WTC11 (cell line): ENCODE measurements at regions of chr6 and their contacts with region 1.

Region 1: DNA sequence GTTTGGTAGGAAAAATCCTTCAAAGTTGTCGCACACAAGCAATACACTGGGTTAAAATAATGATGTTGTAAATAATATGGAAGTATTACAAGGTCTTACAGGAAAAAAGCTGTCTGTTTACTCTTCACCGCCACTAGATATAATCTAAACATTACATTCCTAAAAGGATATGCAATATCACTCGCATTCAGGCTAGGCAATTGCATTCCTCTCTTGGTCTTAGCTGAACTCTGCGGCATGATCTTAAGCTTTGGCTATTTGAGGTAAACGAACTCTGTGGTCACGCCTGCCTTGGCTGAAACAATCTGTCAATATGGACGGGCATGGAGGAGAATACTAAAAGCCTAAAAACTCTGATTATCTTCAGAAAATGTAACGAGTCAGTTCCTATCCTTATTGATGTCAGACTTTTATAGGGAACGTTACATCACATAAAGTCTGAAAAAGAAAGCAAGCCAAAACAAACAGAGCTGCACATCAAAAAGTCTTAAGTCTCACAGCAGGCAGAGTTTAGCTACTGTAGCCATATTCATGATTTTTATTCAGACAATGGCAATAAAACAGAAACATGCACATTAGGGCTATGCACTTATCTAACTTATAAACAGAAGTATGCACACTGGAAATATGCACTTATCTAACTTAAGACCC is 30.8 kb upstream of the FILIP1 start:
- DNase-seq: no peak
- ATAC-seq: no peak
- H3K4me3 Mint-ChIP-seq: no peak overlapping the region
- H3K27ac Mint-ChIP-seq: no peak overlapping the region
- H3K4me1 Mint-ChIP-seq: peaks cover 9% of the 10 kb centered on the region
- H3K27me3 Mint-ChIP-seq: no peaks in the 10 kb centered on the region
- CTCF ChIP-seq: no peak

Region 2: GRCh38 chr6:75368151-75368779 is 156.2 kb before region 1 on chr6:
- CTCF ChIA-PET with region 1: interaction called, 19 read pairs
- POLR2A ChIA-PET with region 1: no interaction called
- DNase-seq: peak; percentile 68
- ATAC-seq: peak; percentile 99
- H3K4me3 Mint-ChIP-seq: no peak overlapping the region
- H3K27ac Mint-ChIP-seq: peak overlapping the region; percentile 63; the same call in 1 of the 2 replicates
- H3K4me1 Mint-ChIP-seq: peaks cover 9% of the 10 kb centered on the region
- H3K27me3 Mint-ChIP-seq: no peaks in the 10 kb centered on the region
- CTCF ChIP-seq: peak; percentile 44; the same call in 1 of the 2 replicates